ENCODE measurements at regions of chr3 and their contacts with region 1.

Region 1: GRCh38 chr3:48400824-48401433 is 28.9 kb downstream of the FBXW12 start:
- DNase-seq: peak; percentile 83
- ATAC-seq: peak; percentile 89
- H3K4me3 ChIP-seq: no peak overlapping the region
- H3K4me3 Mint-ChIP-seq: no peak overlapping the region
- H3K27ac ChIP-seq: no peak overlapping the region
- H3K27ac Mint-ChIP-seq: no peak overlapping the region
- H3K4me1 ChIP-seq: no peaks in the 10 kb centered on the region
- H3K4me1 Mint-ChIP-seq: no peaks in the 10 kb centered on the region
- H3K27me3 ChIP-seq: peaks cover 0 to under 1% (median 0%) of the 10 kb centered on the region in 4 experiments
- H3K27me3 Mint-ChIP-seq: peaks cover 8% of the 10 kb centered on the region
- CTCF ChIP-seq: peak; percentile 93

Region 2: GRCh38 chr3:48219543-48219942 is 181.4 kb before region 1 on chr3:
- CTCF ChIA-PET with region 1: no interaction called
- POLR2A ChIA-PET with region 1: no interaction called
- intact Hi-C with region 1: no loop called
- DNase-seq: no peak
- ATAC-seq: no peak
- H3K4me3 ChIP-seq: no peak overlapping the region
- H3K4me3 Mint-ChIP-seq: no peak overlapping the region
- H3K27ac ChIP-seq: no peak overlapping the region
- H3K27ac Mint-ChIP-seq: no peak overlapping the region
- H3K4me1 ChIP-seq: peaks cover 39 to 41% of the 10 kb centered on the region in 2 donors
- H3K4me1 Mint-ChIP-seq: peaks cover 44% of the 10 kb centered on the region
- H3K27me3 ChIP-seq: no peaks in the 10 kb centered on the region
- H3K27me3 Mint-ChIP-seq: no peaks in the 10 kb centered on the region
- CTCF ChIP-seq: no peak

Region 3: DNA sequence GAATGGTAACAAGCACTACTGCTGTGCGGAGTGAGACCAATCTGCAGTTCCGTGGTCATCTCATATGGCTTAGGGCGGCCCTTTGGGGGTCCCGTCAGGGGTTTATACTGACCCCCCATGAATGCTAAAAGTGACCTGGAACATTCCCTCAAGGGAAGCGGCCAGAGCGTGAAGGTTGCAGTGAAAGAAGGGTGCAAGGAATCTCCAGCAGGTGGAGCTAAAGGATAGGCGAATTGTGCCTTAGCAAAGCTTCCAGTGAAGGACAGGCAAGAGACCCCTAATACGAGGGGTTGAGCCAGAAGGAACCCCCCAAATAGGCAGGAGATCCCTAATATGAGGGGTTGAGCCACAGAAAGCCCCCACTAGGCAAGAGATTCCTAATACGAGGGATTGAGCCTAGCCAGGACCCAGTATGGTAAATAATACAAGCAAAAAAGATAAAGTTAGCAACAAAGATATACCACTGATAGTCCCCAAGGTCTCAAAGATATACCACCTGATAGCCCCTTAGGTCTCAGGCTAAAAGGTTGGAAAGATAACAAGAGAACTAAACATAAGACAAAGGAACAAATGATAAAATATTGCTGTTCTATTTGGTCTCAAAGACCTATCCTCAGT is 127.2 kb before region 1 on chr3:
- CTCF ChIA-PET with region 1: interaction called, 18 read pairs
- POLR2A ChIA-PET with region 1: no interaction called
- intact Hi-C with region 1: loop called (anchors 1 kb)
- DNase-seq: peak; percentile 78
- ATAC-seq: peak; percentile 63
- H3K4me3 ChIP-seq: no peak overlapping the region
- H3K4me3 Mint-ChIP-seq: no peak overlapping the region
- H3K27ac ChIP-seq: no peak overlapping the region
- H3K27ac Mint-ChIP-seq: no peak overlapping the region
- H3K4me1 ChIP-seq: no peaks in the 10 kb centered on the region
- H3K4me1 Mint-ChIP-seq: no peaks in the 10 kb centered on the region
- H3K27me3 ChIP-seq: no peaks in the 10 kb centered on the region
- H3K27me3 Mint-ChIP-seq: no peaks in the 10 kb centered on the region
- CTCF ChIP-seq: peak; percentile 79

Region 4: GRCh38 chr3:48388966-48389365 is 12.0 kb before region 1 on chr3:
- CTCF ChIA-PET with region 1: interaction called, 14 read pairs
- POLR2A ChIA-PET with region 1: no interaction called
- intact Hi-C with region 1: no loop called
- DNase-seq: no peak
- ATAC-seq: no peak
- H3K4me3 ChIP-seq: no peak overlapping the region
- H3K4me3 Mint-ChIP-seq: no peak overlapping the region
- H3K27ac ChIP-seq: no peak overlapping the region
- H3K27ac Mint-ChIP-seq: no peak overlapping the region
- H3K4me1 ChIP-seq: no peaks in the 10 kb centered on the region
- H3K4me1 Mint-ChIP-seq: no peaks in the 10 kb centered on the region
- H3K27me3 ChIP-seq: peaks cover 0 to 2% (median 0%) of the 10 kb centered on the region in 4 experiments
- H3K27me3 Mint-ChIP-seq: peaks cover 38% of the 10 kb centered on the region
- CTCF ChIP-seq: no peak

Region 5: DNA sequence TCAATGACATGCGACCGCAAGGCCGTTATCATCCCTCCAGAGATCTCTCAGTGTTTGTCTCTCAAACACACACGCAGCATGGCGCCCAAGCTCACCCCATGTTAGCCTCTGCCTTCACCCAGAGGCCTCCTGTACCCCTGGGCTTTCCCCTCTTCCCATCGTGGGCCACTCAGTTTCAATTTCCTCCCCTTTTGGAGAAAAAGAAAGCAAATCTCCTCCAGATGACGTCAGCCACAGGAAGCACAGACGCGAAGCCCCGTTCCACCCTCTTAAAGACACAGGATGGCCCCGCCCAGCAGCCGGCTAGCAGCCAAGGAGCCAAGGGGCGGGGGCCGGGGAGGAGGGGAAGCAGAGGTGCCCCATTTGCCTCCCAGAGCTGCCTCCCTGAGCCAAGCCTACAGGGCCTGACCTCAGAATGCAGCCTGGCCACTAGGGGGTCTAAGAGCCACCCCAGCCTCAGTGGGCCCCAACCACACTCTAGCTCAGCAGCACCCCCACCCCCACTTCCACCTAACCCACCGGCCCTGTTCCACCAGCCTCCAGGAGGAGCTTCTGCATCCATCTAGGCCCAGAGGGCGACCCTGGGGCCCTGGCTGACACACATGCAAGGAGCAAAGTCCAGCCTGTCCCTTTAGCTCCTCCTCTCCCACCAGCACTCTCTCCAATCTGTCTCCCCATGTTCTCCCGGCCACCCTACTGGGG is 72.1 kb after region 1 on chr3:
- CTCF ChIA-PET with region 1: interaction called, 10 read pairs
- POLR2A ChIA-PET with region 1: no interaction called
- intact Hi-C with region 1: no loop called
- DNase-seq: peak; percentile 98
- ATAC-seq: peak; percentile 91
- H3K4me3 ChIP-seq: peak overlapping the region; percentile 59 to 95 (median 74)
- H3K4me3 Mint-ChIP-seq: peak overlapping the region; percentile 93
- H3K27ac ChIP-seq: peak overlapping the region; percentile 96 to 99
- H3K27ac Mint-ChIP-seq: peak overlapping the region; percentile 99
- H3K4me1 ChIP-seq: peaks cover 62 to 76% of the 10 kb centered on the region in 2 donors
- H3K4me1 Mint-ChIP-seq: peaks cover 66% of the 10 kb centered on the region
- H3K27me3 ChIP-seq: no peaks in the 10 kb centered on the region
- H3K27me3 Mint-ChIP-seq: no peaks in the 10 kb centered on the region
- CTCF ChIP-seq: peak; percentile 56

Region 6: DNA sequence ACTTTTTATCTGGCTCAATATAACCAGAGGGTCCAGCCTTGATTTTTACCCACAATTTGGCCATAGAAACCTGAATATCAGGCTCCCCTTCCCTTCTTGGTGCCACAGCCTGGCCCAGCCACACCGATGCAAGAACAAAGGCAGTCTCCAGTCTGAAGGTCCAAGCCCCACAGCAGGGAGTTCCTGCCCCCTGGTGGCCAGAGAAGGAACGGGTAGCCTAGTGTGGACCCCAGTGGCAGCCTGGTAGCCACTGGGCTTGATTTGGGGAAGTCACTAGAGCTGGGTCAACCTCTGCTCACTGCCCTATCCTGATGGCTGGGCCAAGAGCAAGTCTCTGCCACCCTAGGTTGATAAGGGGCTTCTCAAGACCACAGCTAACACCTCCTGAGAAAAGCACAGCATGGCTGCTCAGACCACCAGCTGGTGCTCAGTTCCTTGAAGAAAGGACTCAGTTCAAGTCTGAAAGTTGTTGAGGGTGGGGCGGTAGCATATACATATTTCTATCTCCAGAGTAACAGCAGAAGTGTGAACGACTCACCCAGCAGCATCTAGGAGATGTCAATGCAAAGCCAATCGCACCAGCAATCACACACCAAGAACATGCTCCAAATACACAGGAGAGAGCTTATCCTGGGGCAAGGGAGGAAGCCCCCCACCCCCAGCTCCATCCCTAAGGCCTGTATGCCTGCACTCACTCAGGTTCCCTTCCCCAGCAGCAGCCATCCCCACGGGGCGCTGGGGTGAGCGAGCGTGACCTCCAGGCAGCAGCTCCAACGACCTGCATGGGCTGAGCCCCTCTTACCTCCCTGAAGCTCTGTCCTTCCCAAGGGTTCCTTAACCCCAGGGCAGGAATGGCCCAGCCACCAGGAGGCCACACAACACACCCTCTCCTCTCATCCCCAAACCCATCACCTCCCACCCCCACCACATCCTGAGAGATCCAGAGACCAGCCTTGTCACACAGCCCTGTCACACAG is 148.1 kb after region 1 on chr3:
- CTCF ChIA-PET with region 1: interaction called, 190 read pairs
- POLR2A ChIA-PET with region 1: no interaction called
- intact Hi-C with region 1: loop called (anchors 1 kb)
- DNase-seq: peak; percentile 81
- ATAC-seq: peak; percentile 97
- H3K4me3 ChIP-seq: no peak overlapping the region
- H3K4me3 Mint-ChIP-seq: no peak overlapping the region
- H3K27ac ChIP-seq: no peak overlapping the region
- H3K27ac Mint-ChIP-seq: no peak overlapping the region
- H3K4me1 ChIP-seq: peaks cover 0 to 2% of the 10 kb centered on the region in 2 donors
- H3K4me1 Mint-ChIP-seq: no peaks in the 10 kb centered on the region
- H3K27me3 ChIP-seq: no peaks in the 10 kb centered on the region
- H3K27me3 Mint-ChIP-seq: no peaks in the 10 kb centered on the region
- CTCF ChIP-seq: peak; percentile 85

Region 7: GRCh38 chr3:48739955-48740823 is 339.3 kb after region 1 on chr3:
- CTCF ChIA-PET with region 1: interaction called, 14 read pairs
- POLR2A ChIA-PET with region 1: no interaction called
- intact Hi-C with region 1: no loop called
- DNase-seq: peak; percentile 67
- ATAC-seq: peak; percentile 90
- H3K4me3 ChIP-seq: no peak overlapping the region
- H3K4me3 Mint-ChIP-seq: no peak overlapping the region
- H3K27ac ChIP-seq: no peak overlapping the region
- H3K27ac Mint-ChIP-seq: no peak overlapping the region
- H3K4me1 ChIP-seq: peaks cover 0 to 8% of the 10 kb centered on the region in 2 donors
- H3K4me1 Mint-ChIP-seq: peaks cover 13% of the 10 kb centered on the region
- H3K27me3 ChIP-seq: no peaks in the 10 kb centered on the region
- H3K27me3 Mint-ChIP-seq: no peaks in the 10 kb centered on the region
- CTCF ChIP-seq: peak; percentile 77